PC-9 (cell line): ENCODE measurements at regions of chr2 and their contacts with region 1.

Region 1: DNA sequence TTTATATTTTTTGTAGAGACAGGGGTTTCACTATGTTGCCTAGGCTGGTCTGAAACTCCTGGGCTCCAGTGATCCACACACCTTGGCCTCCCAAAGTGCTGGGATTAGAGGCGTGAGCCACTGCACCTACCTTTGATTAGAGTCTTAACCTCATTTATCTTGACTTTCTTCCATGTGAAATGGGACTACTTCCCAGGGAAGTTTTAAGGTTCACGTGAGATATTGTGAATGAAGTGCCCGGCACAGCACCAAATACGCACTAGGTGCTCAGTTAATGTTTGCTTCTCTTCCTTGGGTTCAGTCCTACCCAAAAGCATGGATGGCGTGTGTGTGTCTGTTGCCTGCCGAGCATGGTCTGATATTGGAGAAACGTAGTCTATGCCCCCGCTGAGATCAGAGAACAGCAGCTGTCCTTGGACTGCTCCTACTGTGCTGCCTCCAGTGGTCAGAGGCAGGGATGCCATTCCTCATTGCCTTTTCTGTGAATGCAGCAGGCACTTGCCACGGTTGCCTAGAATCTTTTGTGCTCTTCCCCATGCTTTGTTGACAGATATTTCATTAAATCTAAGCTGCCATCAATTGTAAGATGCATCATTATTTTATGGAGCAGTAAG is 12.3 kb upstream of the TFCP2L1 start:
- DNase-seq: peak; percentile 42 to 49
- H3K4me3 ChIP-seq: no peak overlapping the region
- H3K27ac ChIP-seq: no peak overlapping the region
- H3K4me1 ChIP-seq: peaks cover 7% of the 10 kb centered on the region
- H3K27me3 ChIP-seq: no peaks in the 10 kb centered on the region
- CTCF ChIP-seq: peak; percentile 80

Region 2: DNA sequence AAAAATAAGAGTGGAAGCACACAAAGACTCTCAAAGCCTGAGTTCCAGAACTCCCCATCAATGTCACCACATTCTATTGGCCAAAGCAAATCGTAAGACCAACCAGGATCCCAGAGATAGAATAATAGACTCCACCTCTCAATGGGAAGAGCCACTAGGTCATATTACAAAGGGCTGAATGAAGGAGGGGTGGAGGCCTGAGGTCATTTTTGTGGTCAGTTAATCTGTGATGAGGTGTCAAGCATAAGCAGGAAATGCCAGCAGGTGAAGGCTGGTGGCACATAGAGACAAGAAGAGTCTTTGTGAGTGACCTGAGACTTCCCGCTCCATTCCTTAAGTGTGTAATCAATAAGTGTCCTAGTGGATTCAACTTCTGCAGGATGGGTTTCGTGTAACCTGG is 156.6 kb before region 1 on chr2:
- CTCF ChIA-PET with region 1: no interaction called
- POLR2A ChIA-PET with region 1: no interaction called
- intact Hi-C with region 1: loop called (anchors 5 kb)
- DNase-seq: peak; percentile 56 to 87
- H3K4me3 ChIP-seq: no peak overlapping the region
- H3K27ac ChIP-seq: no peak overlapping the region
- H3K4me1 ChIP-seq: peaks cover 15% of the 10 kb centered on the region
- H3K27me3 ChIP-seq: no peaks in the 10 kb centered on the region
- CTCF ChIP-seq: no peak